Mammary epithelial cell (primary cell): ENCODE measurements at regions of chr13 and their contacts with region 1.

Region 1: DNA sequence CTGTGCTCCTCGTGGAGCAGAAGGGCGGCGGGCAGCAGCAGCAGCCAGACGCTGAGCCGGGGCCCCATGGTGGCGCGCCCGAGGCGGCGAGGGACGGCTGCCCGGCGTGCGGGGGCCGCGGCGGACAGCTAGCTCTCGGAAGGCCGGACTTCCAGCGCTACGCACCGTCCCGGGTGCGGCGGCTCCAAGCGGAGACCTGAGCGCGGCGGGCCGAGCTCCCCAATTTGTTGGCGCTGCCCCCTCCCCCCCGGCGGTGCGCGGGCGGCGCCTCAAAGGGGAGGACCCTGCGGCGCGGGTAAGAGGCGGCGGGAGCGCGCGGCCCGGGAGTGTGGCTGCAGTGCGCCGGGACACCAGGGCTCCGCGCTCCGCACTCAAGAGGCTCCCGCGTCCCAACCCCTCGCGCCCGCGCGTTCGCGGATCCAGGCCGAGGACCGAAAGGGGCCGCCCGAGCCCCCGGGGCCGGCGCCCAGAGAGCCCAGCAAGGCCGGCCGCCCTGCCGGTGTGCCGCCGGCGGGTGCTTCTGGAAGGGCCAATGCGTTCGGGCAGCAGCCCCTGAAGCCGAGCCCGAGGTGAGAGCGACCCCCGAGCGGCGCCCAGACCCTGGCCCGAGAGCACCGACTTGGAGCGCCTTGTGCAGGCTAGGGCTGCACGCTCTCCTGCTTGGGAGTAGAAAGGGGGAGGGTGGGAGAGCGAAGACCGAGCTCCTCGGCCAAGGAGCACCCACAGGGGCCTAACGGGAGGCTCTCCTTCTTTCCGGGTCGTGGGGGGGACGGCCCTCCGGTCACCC is at the starts of genes COL4A1 and COL4A2:
- DNase-seq: peak; percentile 75
- H3K4me3 ChIP-seq: peak within 1 kb of the TSS; percentile 66 to 73 (median 68)
- H3K27ac ChIP-seq: peak within 1 kb of the TSS; percentile 53
- H3K4me1 ChIP-seq: peaks cover 55% of the 10 kb centered on the region
- H3K27me3 ChIP-seq: no peaks in the 10 kb centered on the region
- CTCF ChIP-seq: no peak
- total RNA-seq, gene COL4A1: 40.9 to 89.0 TPM
- total RNA-seq, gene COL4A2: 74.9 to 94.2 TPM

Region 2: GRCh38 chr13:110216398-110217041 is 90.6 kb before region 1 on chr13:
- CTCF ChIA-PET with region 1: no interaction called
- dilution Hi-C with region 1: no loop called
- in situ Hi-C with region 1: no loop called
- intact Hi-C with region 1: loop called (anchors 5 kb)
- DNase-seq: no peak
- H3K4me3 ChIP-seq: no peak overlapping the region
- H3K27ac ChIP-seq: no peak overlapping the region
- H3K4me1 ChIP-seq: no peaks in the 10 kb centered on the region
- H3K27me3 ChIP-seq: no peaks in the 10 kb centered on the region
- CTCF ChIP-seq: no peak

Region 3: DNA sequence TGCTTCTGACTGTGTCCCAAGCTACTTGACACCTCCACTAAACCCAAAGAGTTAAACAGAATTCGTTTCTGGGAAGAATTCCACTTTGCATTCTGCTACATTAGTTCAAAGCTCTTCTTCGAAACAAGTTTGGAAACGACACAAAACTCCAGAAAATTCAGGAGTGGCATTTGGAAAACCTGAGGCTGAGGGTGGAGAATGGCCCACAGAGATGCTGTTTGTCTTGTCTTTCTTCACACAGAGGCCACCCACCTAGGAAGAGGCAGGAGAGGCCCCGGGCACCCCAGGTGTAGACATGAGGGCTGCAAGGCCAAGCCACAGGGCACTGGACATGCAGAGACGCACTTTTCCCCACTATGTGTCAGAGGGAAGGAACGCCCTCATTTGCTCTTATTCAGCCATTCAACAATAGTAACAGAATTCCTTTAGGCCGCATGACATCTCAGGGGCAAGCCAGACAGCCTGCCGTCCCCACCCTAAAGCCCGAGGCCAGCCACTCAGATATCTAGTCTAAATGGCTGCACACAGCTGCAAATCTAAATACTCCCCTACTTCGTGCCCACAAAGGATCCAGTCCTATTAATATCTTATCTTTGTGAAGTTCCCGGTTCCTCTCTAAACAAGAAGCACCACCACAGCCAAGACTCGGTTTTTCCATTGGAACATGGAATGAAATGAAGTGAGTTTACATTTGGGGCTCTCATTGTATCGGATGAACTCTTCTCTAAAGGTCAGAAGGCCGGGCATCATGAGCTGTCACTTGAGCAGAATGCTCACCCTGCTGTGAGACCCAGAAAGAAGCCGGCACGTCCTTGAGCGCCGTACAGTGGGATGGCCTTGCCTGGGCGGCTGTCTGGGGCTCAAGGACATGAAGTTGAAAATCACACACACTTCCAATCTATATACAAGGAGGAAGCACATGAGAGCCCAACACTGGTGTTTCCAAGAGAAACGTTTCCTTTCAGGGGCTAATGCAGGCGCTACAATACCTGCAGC is 20.0 kb before region 1 on chr13:
- CTCF ChIA-PET with region 1: no interaction called
- dilution Hi-C with region 1: no loop called
- in situ Hi-C with region 1: no loop called
- intact Hi-C with region 1: loop called (anchors 1 kb)
- DNase-seq: peak; percentile 75
- H3K4me3 ChIP-seq: no peak overlapping the region
- H3K27ac ChIP-seq: no peak overlapping the region
- H3K4me1 ChIP-seq: peaks cover 19% of the 10 kb centered on the region
- H3K27me3 ChIP-seq: no peaks in the 10 kb centered on the region
- CTCF ChIP-seq: no peak

Region 4: DNA sequence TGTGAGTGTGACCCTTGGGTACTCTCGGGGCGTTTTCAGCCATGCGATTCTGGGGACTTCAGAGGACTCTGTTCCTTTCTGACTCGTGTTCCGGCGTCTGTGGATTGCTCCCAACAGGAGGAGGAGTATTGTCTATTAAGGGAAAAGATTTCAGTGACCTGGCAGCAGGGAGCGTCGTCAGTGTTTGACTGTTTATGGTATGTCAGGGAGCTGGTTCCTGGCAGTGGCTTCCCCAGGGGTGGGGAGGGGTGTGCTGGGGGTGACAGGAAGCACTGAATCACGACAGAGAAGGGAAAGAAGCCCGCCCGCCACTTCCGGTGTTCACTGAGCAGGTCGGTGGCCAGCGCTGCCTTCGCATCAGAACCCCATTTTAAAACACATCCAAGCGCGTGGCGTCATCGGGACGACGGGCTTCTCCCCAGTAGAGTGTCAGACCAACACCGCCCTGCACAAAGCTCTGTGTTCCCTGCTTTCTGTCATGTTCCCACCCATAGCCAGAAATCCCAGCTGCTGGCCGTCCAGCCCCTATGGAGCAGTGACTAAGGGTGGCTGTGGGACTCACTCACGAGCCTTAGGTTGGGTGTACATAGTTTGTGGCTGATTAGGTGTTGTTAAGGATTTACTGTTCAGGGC is 33.8 kb after region 1 on chr13:
- CTCF ChIA-PET with region 1: no interaction called
- dilution Hi-C with region 1: no loop called
- in situ Hi-C with region 1: no loop called
- intact Hi-C with region 1: loop called (anchors 1 kb)
- DNase-seq: peak; percentile 53
- H3K4me3 ChIP-seq: no peak overlapping the region
- H3K27ac ChIP-seq: peak overlapping the region; percentile 51
- H3K4me1 ChIP-seq: peaks cover 52% of the 10 kb centered on the region
- H3K27me3 ChIP-seq: no peaks in the 10 kb centered on the region
- CTCF ChIP-seq: no peak

Region 5: DNA sequence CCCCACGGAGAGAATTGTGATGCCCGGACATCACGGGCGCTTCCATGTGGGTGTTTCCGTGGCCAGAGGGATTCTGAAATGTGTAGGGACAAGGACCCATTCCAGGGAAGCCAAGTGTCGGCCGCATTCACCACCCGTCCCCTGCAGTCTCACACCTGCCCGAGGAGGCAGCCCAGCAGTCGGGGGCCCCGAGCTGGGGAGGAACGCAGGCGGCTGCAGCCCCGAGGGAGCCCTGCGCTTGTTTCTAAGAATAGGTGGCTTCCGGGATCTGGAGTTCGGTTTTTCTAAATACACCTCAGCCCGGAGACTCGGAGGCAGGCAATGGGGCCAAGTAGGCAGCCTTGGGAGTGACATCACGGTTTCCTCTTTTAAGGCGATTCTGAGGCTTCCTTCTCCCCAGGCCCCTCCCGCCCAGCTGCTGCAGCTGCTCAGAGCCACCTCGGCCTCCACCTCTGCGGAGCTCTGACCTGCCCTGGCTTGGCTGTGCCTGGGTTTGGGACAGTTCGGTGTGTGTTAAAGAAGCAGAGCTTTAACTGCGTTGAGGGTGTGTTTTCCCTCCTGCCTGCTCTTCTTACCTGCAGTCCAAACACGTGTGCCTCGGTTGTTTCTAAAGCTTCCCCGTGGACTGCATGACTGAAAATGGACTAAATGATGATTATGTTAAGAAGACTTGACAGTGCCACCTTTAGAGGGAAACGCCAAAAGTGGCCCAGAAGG is 80.4 kb after region 1 on chr13:
- CTCF ChIA-PET with region 1: no interaction called
- dilution Hi-C with region 1: loop called (anchors 5 kb)
- in situ Hi-C with region 1: no loop called
- intact Hi-C with region 1: loop called (anchors 1 kb)
- DNase-seq: peak; percentile 53
- H3K4me3 ChIP-seq: peak overlapping the region in 2 of 3 experiments; percentile 27 to 31
- H3K27ac ChIP-seq: peak overlapping the region; percentile 64
- H3K4me1 ChIP-seq: peaks cover 18% of the 10 kb centered on the region
- H3K27me3 ChIP-seq: no peaks in the 10 kb centered on the region
- CTCF ChIP-seq: no peak